PC-9 (cell line): ENCODE measurements at regions of chr14 and their contacts with region 1.

Region 1: DNA sequence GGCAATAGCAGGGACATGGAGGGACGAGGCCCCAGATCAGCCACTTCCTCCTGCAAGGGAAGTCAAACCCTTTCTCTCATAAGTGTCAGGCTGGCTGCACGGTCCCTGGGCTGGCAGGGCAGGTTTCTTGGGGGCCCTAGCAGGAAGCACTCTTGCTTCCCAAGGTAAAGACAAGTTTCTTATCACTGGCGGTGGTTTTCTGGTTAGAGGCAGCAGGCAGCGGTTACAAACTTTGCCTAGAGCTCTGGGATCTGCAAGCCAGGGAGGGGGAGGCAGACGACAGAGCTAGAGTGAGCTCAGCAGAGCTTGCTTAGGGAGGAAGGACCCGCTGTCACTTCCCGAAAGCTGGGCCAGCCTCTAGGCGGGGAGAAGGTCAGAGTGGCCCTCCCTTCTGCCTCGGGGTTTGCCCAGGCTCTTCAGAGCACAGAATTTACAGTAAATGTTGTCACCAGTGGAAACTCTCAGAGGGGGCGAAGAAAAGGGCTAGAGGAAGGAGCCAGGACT is 20.4 kb downstream of the BATF start:
- DNase-seq: peak; percentile 75 to 93
- H3K4me3 ChIP-seq: no peak overlapping the region
- H3K27ac ChIP-seq: peak overlapping the region; percentile 34; the same call in 1 of the 2 replicates
- H3K4me1 ChIP-seq: peaks cover 16% of the 10 kb centered on the region
- H3K27me3 ChIP-seq: no peaks in the 10 kb centered on the region
- CTCF ChIP-seq: no peak

Region 2: GRCh38 chr14:75572114-75572513 is 29.5 kb after region 1 on chr14:
- CTCF ChIA-PET with region 1: no interaction called
- POLR2A ChIA-PET with region 1: no interaction called
- intact Hi-C with region 1: loop called (anchors 1 kb)
- DNase-seq: peak; percentile 66 to 83
- H3K4me3 ChIP-seq: peak overlapping the region; percentile 18; the same call in 1 of the 2 replicates
- H3K27ac ChIP-seq: peak overlapping the region; percentile 33
- H3K4me1 ChIP-seq: peaks cover 32% of the 10 kb centered on the region
- H3K27me3 ChIP-seq: no peaks in the 10 kb centered on the region
- CTCF ChIP-seq: no peak